ENCODE measurements at regions of chr3 and their contacts with region 1.

Region 1: DNA sequence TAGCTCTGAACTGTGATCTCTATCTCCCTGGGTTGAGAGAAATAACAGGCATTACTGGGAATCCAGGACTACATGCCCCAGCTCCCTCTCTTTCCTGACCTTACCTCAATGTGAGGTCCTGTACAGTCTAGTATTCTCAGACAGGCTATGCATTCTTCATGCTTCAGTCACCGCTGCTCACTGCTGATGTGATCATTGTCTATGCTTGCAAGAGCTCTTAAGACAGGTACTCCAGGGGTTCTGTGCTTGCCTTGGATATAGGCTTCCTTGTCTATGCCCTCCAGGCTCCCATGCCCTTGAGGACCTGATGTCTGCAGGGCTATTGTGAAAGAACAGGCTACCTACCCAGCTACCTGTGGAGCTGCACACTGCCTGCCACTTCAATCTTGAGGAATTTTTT is 183.6 kb downstream of the MBNL1 start:
- DNase-seq: no peak
- H3K4me3 ChIP-seq: no peak overlapping the region
- H3K27ac ChIP-seq: no peak overlapping the region
- H3K4me1 ChIP-seq: no peaks in the 10 kb centered on the region
- H3K27me3 ChIP-seq: no peaks in the 10 kb centered on the region
- CTCF ChIP-seq: no peak
- POLR2A ChIP-seq: no peak

Region 2: GRCh38 chr3:152183473-152183872 is 268.8 kb before region 1 on chr3:
- intact Hi-C with region 1: loop called (anchors 10 kb)
- DNase-seq: no peak
- H3K4me3 ChIP-seq: no peak overlapping the region
- H3K27ac ChIP-seq: no peak overlapping the region
- H3K4me1 ChIP-seq: no peaks in the 10 kb centered on the region
- H3K27me3 ChIP-seq: no peaks in the 10 kb centered on the region
- CTCF ChIP-seq: peak in 1 of 4 experiments; percentile 31
- POLR2A ChIP-seq: no peak

Measured in prostate gland (tissue), 2 donors.